CD4-positive, alpha-beta T cell (primary cell): ENCODE measurements at regions of chr9 and their contacts with region 1.

Region 1: DNA sequence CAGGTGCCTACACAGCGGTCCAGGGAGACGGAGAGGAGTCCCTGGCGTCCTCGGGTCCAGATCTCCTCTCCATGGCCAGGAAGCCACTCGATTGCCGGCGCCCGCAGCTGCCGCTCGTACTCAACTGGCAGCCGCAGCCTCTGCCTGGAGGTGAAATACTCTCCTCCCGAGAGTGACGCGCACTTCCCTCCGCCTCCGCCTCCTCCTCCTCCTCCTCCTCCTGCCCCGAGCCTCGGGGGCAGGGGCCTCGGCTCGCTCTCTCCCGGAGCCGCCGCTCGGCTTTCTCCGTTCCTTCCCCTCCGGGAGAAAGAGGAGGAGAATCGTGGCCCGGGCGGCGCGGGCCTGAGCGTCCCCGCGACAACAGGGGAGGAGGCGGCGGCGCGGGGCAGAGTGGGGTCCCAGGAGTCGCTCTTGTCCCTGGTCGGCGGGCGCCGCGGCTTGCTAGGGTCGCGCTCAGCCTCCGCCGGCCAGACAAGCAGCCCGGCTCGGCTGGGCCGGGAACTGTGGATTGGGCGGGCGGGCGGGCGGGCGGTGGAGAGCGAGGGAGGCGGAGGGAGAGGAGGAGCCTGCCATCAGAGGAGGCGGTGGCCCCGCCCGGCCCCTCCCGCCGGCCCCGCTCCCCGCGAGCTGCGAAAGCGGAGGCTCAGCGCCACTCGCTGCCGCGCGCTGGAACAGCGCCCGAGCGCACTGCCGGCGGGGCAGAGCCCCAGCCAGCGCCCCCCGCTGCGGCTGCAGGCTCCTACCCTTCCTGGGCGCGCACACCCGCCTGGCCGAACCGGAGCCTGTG is at the start of gene CEMIP2:
- DNase-seq: peak; percentile 82 to 94 (median 87)
- ATAC-seq: peak; percentile 78
- H3K4me3 ChIP-seq: peak within 1 kb of the TSS; percentile 72
- H3K4me3 Mint-ChIP-seq: peak within 1 kb of the TSS; percentile 98
- H3K27ac ChIP-seq: peak within 1 kb of the TSS; percentile 89
- H3K27ac Mint-ChIP-seq: peak within 1 kb of the TSS; percentile 99
- H3K4me1 ChIP-seq: peaks cover 36% of the 10 kb centered on the region
- H3K4me1 Mint-ChIP-seq: peaks cover 46% of the 10 kb centered on the region
- H3K27me3 ChIP-seq: no peaks in the 10 kb centered on the region
- H3K27me3 Mint-ChIP-seq: no peaks in the 10 kb centered on the region
- CTCF ChIP-seq: peak; percentile 58
- total RNA-seq, gene CEMIP2: 301 to 305 TPM

Region 2: GRCh38 chr9:71072587-71072986 is 696.0 kb before region 1 on chr9:
- CTCF ChIA-PET with region 1: no interaction called
- POLR2A ChIA-PET with region 1: no interaction called
- intact Hi-C with region 1: no loop called
- DNase-seq: no peak
- ATAC-seq: no peak
- H3K4me3 ChIP-seq: no peak overlapping the region
- H3K4me3 Mint-ChIP-seq: no peak overlapping the region
- H3K27ac ChIP-seq: no peak overlapping the region
- H3K27ac Mint-ChIP-seq: no peak overlapping the region
- H3K4me1 ChIP-seq: no peaks in the 10 kb centered on the region
- H3K4me1 Mint-ChIP-seq: no peaks in the 10 kb centered on the region
- H3K27me3 ChIP-seq: no peaks in the 10 kb centered on the region
- H3K27me3 Mint-ChIP-seq: no peaks in the 10 kb centered on the region
- CTCF ChIP-seq: no peak

Region 3: DNA sequence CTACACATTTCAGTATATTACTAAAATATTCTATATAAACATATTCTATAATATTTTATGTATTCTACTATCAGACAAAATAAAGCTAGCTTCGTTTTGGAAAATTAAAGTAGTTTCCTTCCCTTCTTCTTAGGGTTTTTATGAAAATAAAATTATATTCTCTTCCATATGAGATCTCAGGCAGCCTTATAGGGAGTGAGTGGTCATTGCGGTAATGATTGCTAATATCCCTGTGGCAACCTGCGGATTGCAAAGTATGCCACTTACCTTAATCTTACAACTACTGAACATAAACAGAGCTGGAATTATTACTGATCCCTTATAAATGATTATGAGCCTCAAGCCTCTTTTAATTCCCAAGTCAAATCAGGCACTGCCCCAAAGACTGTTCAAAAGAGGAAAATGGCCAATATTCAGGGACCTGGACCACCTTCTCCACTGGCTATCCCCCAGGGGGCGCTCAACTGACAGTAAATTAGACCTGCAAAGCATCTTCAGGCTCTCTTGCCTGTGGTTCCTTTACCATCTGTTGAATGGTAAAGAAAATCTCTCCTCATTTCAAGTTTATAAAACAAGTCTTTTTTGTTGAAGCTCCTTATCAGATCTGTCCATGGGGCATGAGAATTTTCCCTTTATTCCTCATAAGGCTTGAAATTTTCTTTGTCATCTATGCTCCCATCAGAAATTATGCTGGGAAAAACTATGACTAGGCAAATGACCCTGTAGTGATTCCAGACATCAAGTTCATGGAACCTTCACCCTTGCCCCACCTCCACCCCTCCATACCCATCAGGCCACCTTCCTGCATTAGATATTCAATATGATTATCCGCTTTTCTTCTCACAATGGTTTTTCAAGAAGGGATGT is 164.2 kb before region 1 on chr9:
- CTCF ChIA-PET with region 1: interaction called, 3 read pairs
- POLR2A ChIA-PET with region 1: interaction called, 8 read pairs
- intact Hi-C with region 1: loop called (anchors 1 kb)
- DNase-seq: peak; percentile 60 to 91 (median 77)
- ATAC-seq: peak; percentile 75
- H3K4me3 ChIP-seq: no peak overlapping the region
- H3K4me3 Mint-ChIP-seq: no peak overlapping the region
- H3K27ac ChIP-seq: no peak overlapping the region
- H3K27ac Mint-ChIP-seq: no peak overlapping the region
- H3K4me1 ChIP-seq: no peaks in the 10 kb centered on the region
- H3K4me1 Mint-ChIP-seq: no peaks in the 10 kb centered on the region
- H3K27me3 ChIP-seq: no peaks in the 10 kb centered on the region
- H3K27me3 Mint-ChIP-seq: no peaks in the 10 kb centered on the region
- CTCF ChIP-seq: peak; percentile 94

Region 4: GRCh38 chr9:71663216-71663615 is 105.4 kb before region 1 on chr9:
- CTCF ChIA-PET with region 1: no interaction called
- POLR2A ChIA-PET with region 1: no interaction called
- intact Hi-C with region 1: no loop called
- DNase-seq: no peak
- ATAC-seq: no peak
- H3K4me3 ChIP-seq: no peak overlapping the region
- H3K4me3 Mint-ChIP-seq: no peak overlapping the region
- H3K27ac ChIP-seq: no peak overlapping the region
- H3K27ac Mint-ChIP-seq: no peak overlapping the region
- H3K4me1 ChIP-seq: no peaks in the 10 kb centered on the region
- H3K4me1 Mint-ChIP-seq: no peaks in the 10 kb centered on the region
- H3K27me3 ChIP-seq: no peaks in the 10 kb centered on the region
- H3K27me3 Mint-ChIP-seq: no peaks in the 10 kb centered on the region
- CTCF ChIP-seq: no peak

Region 5: GRCh38 chr9:71725590-71726338 is 42.8 kb before region 1 on chr9:
- CTCF ChIA-PET with region 1: interaction called, 7 read pairs
- POLR2A ChIA-PET with region 1: interaction called, 4 read pairs
- intact Hi-C with region 1: loop called in 1 of 2 experiments (anchors 5 kb)
- DNase-seq: no peak
- ATAC-seq: no peak
- H3K4me3 ChIP-seq: no peak overlapping the region
- H3K4me3 Mint-ChIP-seq: no peak overlapping the region
- H3K27ac ChIP-seq: no peak overlapping the region
- H3K27ac Mint-ChIP-seq: no peak overlapping the region
- H3K4me1 ChIP-seq: no peaks in the 10 kb centered on the region
- H3K4me1 Mint-ChIP-seq: no peaks in the 10 kb centered on the region
- H3K27me3 ChIP-seq: no peaks in the 10 kb centered on the region
- H3K27me3 Mint-ChIP-seq: no peaks in the 10 kb centered on the region
- CTCF ChIP-seq: no peak

Region 6: GRCh38 chr9:71795097-71795813 is 26.7 kb after region 1 on chr9:
- CTCF ChIA-PET with region 1: interaction called, 5 read pairs
- POLR2A ChIA-PET with region 1: interaction called, 71 read pairs
- intact Hi-C with region 1: loop called in 1 of 2 experiments (anchors 1 kb)
- DNase-seq: peak in 6 of 14 experiments; percentile 14 to 89 (median 59)
- ATAC-seq: peak; percentile 88
- H3K4me3 ChIP-seq: no peak overlapping the region
- H3K4me3 Mint-ChIP-seq: peak overlapping the region; percentile 60
- H3K27ac ChIP-seq: peak overlapping the region; percentile 46 to 86
- H3K27ac Mint-ChIP-seq: peak overlapping the region; percentile 94
- H3K4me1 ChIP-seq: peaks cover 57% of the 10 kb centered on the region
- H3K4me1 Mint-ChIP-seq: peaks cover 73% of the 10 kb centered on the region
- H3K27me3 ChIP-seq: no peaks in the 10 kb centered on the region
- H3K27me3 Mint-ChIP-seq: no peaks in the 10 kb centered on the region
- CTCF ChIP-seq: no peak

Region 7: DNA sequence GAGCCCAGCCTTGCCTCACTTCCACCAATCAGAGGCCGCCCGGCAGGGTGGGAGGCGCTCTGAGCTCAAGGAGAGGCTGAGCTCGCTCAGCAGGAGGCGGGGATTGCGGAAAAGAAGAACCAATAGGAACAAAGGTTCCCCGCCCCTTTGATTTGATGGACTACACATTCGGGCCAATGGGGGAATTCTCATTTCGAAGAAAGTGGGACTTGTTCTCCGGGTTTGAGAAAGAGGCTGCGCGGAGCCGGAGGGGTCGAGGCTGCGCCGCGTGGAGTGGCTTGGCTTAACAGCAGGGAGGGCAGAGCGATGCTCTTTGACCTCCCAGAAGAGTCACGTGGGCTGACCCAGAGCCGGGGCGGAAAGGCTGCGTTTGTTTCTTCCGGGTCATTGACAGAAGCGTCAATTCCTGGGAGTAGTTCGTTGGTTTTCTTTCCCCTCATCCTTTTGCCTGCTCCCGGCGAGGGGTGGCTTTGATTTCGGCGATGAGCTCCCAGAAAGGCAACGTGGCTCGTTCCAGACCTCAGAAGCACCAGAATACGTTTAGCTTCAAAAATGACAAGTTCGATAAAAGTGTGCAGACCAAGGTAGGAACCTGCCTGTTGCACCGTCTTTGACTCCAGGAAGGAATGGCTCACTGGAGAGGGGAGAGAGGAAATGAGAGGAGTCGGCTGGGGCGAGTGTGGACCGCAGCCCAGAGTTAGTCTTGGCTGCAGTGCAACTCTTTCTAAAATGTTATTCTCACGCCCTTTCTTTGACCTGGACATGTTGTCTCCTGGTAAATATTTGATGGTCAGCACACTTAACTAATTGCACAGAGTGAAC is 142.9 kb after region 1 on chr9 and contains the start of gene C9orf85:
- CTCF ChIA-PET with region 1: interaction called, 8 read pairs
- POLR2A ChIA-PET with region 1: interaction called, 29 read pairs
- intact Hi-C with region 1: loop called in 1 of 2 experiments (anchors 5 kb)
- DNase-seq: peak; percentile 89 to 99 (median 94)
- ATAC-seq: peak; percentile 93
- H3K4me3 ChIP-seq: peak within 1 kb of the TSS; percentile 67
- H3K4me3 Mint-ChIP-seq: peak within 1 kb of the TSS; percentile 99
- H3K27ac ChIP-seq: peak within 1 kb of the TSS; percentile 64 to 71
- H3K27ac Mint-ChIP-seq: peak within 1 kb of the TSS; percentile 86
- H3K4me1 ChIP-seq: peaks cover 13% of the 10 kb centered on the region
- H3K4me1 Mint-ChIP-seq: peaks cover 75% of the 10 kb centered on the region
- H3K27me3 ChIP-seq: no peaks in the 10 kb centered on the region
- H3K27me3 Mint-ChIP-seq: no peaks in the 10 kb centered on the region
- CTCF ChIP-seq: no peak
- total RNA-seq, gene C9orf85: 3.4 to 3.5 TPM

Region 8: DNA sequence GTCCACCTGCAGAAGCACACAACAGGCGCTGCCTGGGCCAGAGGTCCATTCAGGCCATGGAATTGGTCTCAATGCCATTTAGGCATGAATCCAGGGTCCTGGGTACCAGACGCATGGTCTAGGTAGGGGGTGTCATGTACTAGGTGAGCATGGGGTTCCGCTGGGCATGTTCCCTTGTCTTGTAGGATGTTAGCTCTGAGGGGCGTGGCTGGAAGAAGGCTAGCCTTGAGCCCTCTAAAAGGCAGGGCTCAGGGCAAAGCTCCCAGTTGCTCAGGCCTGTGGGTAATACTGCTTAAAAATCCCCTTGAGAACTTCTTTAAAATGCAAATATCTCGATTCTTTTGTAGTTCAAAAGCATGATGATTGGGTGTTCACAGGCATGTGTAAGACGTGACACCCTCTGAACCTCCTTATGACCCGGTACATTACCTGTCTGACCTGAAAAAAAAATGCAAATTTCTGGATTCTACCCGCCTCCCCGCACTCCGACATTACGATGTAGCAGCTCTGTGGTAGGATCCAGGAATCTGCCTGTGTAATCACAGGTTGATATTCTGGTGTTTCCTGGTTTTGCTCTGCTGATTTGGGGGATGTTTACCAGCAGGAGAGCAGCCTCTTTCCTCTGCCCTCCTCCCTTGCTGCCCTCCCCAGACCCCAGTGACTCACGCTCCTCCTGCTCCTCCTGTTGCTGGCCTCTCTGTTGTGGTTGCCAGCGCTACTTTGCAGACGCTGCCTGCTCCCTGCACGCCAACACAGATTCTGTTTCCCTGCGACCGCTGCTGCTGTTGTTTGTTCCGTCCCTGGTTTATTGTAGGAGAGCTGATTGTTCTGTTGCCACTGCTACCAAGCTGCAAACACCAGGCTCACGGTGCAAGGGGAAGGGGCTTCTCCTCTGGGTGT is 758.6 kb after region 1 on chr9:
- CTCF ChIA-PET with region 1: no interaction called
- POLR2A ChIA-PET with region 1: no interaction called
- intact Hi-C with region 1: loop called in 1 of 2 experiments (anchors 10 kb)
- DNase-seq: peak; percentile 58 to 91 (median 80)
- ATAC-seq: peak; percentile 85
- H3K4me3 ChIP-seq: peak overlapping the region; percentile 47
- H3K4me3 Mint-ChIP-seq: peak overlapping the region; percentile 84
- H3K27ac ChIP-seq: peak overlapping the region; percentile 59 to 63
- H3K27ac Mint-ChIP-seq: peak overlapping the region; percentile 84
- H3K4me1 ChIP-seq: peaks cover 25% of the 10 kb centered on the region
- H3K4me1 Mint-ChIP-seq: peaks cover 31% of the 10 kb centered on the region
- H3K27me3 ChIP-seq: no peaks in the 10 kb centered on the region
- H3K27me3 Mint-ChIP-seq: no peaks in the 10 kb centered on the region
- CTCF ChIP-seq: no peak